ENCODE measurements at regions of chr12 and their contacts with region 1.

Region 1: DNA sequence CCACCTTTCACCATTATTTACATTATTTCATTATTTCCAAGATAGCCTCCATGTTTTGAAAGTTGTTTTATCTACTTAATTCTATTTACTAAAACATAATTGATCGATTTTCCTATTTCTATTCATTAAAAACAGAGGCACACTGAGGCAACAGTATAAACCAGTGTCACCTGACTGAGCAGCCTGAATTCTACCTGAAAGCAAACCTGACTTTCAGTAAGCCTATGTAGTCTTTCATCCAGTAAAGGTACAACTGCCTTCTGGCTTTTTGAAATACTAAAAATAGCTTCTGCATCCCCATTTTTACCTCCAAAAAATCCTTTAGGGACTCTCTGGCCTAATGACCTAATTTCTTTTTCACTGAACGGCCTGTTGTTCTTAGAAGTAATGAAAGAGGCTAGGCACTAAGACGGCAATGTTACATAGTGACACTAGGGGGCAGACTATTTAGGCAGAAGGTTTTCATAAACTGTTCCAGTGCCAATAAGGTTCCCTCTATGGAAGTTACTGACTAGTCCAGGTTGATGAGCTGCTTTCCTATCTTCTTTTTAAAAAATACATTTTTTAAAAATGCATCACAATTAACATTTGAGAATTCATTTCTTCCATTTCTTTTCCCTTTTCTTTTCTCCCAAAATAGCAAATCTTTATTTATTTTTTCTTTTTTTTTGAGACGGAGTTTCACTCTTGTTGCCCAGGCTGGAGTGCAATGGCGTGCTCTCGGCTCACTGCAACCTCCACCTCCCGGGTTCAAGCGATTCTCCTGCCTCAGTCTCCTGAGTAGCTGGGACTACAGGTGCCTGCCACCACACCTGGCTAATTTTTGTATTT is 17.5 kb downstream of the ANAPC5 start:
- DNase-seq: no peak
- ATAC-seq: peak; percentile 68

Region 2: GRCh38 chr12:121443193-121443870 is 108.6 kb after region 1 on chr12:
- intact Hi-C with region 1: loop called (anchors 5 kb)
- DNase-seq: peak; percentile 92
- ATAC-seq: peak; percentile 85